HEK293 (cell line): ENCODE measurements at regions of chr15 and their contacts with region 1.

Region 1: GRCh38 chr15:85296615-85297402 is 83.6 kb upstream of the AKAP13 start:
- H3K4me3 ChIP-seq: no peak overlapping the region; the same call in 1 of the 2 replicates
- H3K27ac ChIP-seq: no peak overlapping the region
- H3K4me1 ChIP-seq: no peaks in the 10 kb centered on the region; the same call in 1 of the 2 replicates
- CTCF ChIP-seq: peak; percentile 73; the same call in 1 of the 2 replicates

Region 2: DNA sequence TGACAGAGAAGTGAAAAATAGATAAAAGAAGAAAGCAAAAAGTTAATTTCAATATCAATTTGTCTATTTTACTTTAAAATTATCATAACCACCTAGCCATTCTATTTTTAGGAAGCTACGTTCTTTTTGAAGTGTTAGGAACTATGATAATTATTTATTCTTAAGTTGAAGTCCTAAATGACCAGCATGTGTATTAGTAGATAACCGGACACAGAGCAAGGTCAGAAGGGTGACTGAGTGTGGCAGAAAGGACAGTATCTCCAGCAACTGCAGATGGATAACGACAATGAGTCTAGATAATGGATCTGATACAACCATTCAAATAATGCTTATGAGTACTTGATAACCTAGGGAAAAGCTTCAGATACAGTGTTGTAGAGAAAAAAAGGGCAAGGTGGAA is 117.1 kb before region 1 on chr15:
- CTCF ChIA-PET with region 1: no interaction called
- POLR2A ChIA-PET with region 1: no interaction called
- H3K4me3 ChIP-seq: no peak overlapping the region
- H3K27ac ChIP-seq: no peak overlapping the region
- H3K4me1 ChIP-seq: 0 out of 2 replicates have a peak, but pooled peaks cover 2% of the 10 kb centered on the region
- CTCF ChIP-seq: no peak

Region 3: GRCh38 chr15:85306946-85307708 is 10.3 kb after region 1 on chr15:
- CTCF ChIA-PET with region 1: interaction called, 17 read pairs
- POLR2A ChIA-PET with region 1: no interaction called
- H3K4me3 ChIP-seq: no peak overlapping the region
- H3K27ac ChIP-seq: no peak overlapping the region
- H3K4me1 ChIP-seq: no peaks in the 10 kb centered on the region
- CTCF ChIP-seq: no peak

Region 4: GRCh38 chr15:85318048-85318731 is 21.4 kb after region 1 on chr15:
- CTCF ChIA-PET with region 1: interaction called, 23 read pairs
- POLR2A ChIA-PET with region 1: no interaction called
- H3K4me3 ChIP-seq: no peak overlapping the region
- H3K27ac ChIP-seq: no peak overlapping the region
- H3K4me1 ChIP-seq: 0 out of 2 replicates have a peak, but pooled peaks cover 4% of the 10 kb centered on the region
- CTCF ChIP-seq: no peak

Region 5: GRCh38 chr15:85330901-85331588 is 34.2 kb after region 1 on chr15:
- CTCF ChIA-PET with region 1: interaction called, 23 read pairs
- POLR2A ChIA-PET with region 1: no interaction called
- H3K4me3 ChIP-seq: no peak overlapping the region
- H3K27ac ChIP-seq: no peak overlapping the region
- H3K4me1 ChIP-seq: 0 out of 2 replicates have a peak, but pooled peaks cover 2% of the 10 kb centered on the region
- CTCF ChIP-seq: peak; percentile 27; the same call in 1 of the 2 replicates

Region 6: GRCh38 chr15:85485956-85486567 is 189.3 kb after region 1 on chr15:
- CTCF ChIA-PET with region 1: interaction called, 11 read pairs
- POLR2A ChIA-PET with region 1: no interaction called
- H3K4me3 ChIP-seq: no peak overlapping the region
- H3K27ac ChIP-seq: no peak overlapping the region
- H3K4me1 ChIP-seq: peaks cover 6% of the 10 kb centered on the region
- CTCF ChIP-seq: peak; percentile 49; the same call in 1 of the 2 replicates